ENCODE measurements at regions of chr11 and their contacts with region 1.

Region 1: DNA sequence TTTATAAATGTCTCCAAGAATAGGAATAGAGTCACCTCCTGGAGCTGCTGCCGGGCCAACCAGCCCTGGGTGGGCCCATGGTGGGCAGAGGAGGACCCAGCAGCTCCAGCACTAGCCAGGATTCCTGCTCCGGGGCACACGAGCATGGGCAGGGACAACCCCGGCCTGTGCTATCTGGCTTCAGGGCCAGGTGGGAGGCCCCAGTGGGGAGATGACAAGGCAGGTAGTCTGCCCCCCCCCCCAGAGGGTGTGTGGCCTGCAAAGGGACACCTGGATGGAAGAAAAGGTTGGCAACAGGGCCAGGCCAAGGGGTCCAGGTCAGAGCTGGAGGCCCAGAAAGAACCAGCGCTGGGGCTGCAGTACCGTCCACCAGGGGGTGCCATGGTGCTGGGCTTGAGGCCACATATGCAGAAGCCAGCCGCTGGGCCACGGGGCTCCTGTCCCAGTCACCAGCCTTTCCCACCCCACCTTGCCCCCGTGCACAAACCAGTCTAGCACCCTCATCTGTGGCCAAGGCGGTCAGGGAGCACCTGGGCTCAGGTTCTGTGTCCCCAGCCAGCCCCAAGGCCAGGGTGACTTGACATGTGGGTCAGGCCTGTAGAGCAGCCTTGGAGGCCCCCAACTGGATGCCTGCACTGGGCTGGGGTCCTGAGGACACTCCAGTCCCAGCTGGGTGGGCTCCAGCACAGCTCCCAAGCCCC is 3.5 kb downstream of the TSPAN32 start:
- DNase-seq: peak; percentile 29
- H3K4me3 ChIP-seq: peak overlapping the region in 1 of 4 donors; percentile 19
- H3K27ac ChIP-seq: peak overlapping the region; percentile 57 to 89 (median 78)
- H3K4me1 ChIP-seq: peaks cover 30 to 57% (median 37%) of the 10 kb centered on the region in 3 donors
- H3K27me3 ChIP-seq: no peaks in the 10 kb centered on the region
- CTCF ChIP-seq: peak; percentile 93 to 97 (median 95)
- POLR2A ChIP-seq: no peak

Region 2: GRCh38 chr11:2196970-2197770 is 108.1 kb before region 1 on chr11:
- intact Hi-C with region 1: loop called (anchors 5 kb)
- DNase-seq: no peak
- H3K4me3 ChIP-seq: no peak overlapping the region
- H3K27ac ChIP-seq: no peak overlapping the region
- H3K4me1 ChIP-seq: peaks cover 0 to 21% (median 5%) of the 10 kb centered on the region in 3 donors
- H3K27me3 ChIP-seq: peaks cover 0 to 48% (median 0%) of the 10 kb centered on the region in 4 donors
- CTCF ChIP-seq: peak; percentile 70 to 96 (median 92)
- POLR2A ChIP-seq: no peak

Measured in esophagus squamous epithelium (tissue), 5 donors.